IMR-90 (cell line): ENCODE measurements at regions of chrX and their contacts with region 1.

Region 1: GRCh38 chrX:118807151-118808017 is 16.2 kb upstream of the ZCCHC12 start:
- DNase-seq: peak; percentile 52
- ATAC-seq: peak; percentile 90
- H3K4me3 ChIP-seq: no peak overlapping the region
- H3K27ac ChIP-seq: no peak overlapping the region
- H3K4me1 ChIP-seq: no peaks in the 10 kb centered on the region
- H3K27me3 ChIP-seq: peaks cover 2% of the 10 kb centered on the region
- CTCF ChIP-seq: peak; percentile 73
- POLR2A ChIP-seq: no peak
- RAD21 ChIP-seq: peak; percentile 84

Region 2: GRCh38 chrX:118459494-118459893 is 347.9 kb before region 1 on chrX:
- CTCF ChIA-PET with region 1: no interaction called
- POLR2A ChIA-PET with region 1: no interaction called
- dilution Hi-C with region 1: no loop called
- in situ Hi-C with region 1: loop called (anchors 25 kb)
- intact Hi-C with region 1: loop called (anchors 10 kb)
- DNase-seq: peak; percentile 47
- ATAC-seq: peak; percentile 68; the same call in 1 of the 2 replicates
- H3K4me3 ChIP-seq: no peak overlapping the region
- H3K27ac ChIP-seq: no peak overlapping the region
- H3K4me1 ChIP-seq: no peaks in the 10 kb centered on the region
- H3K27me3 ChIP-seq: no peaks in the 10 kb centered on the region
- CTCF ChIP-seq: peak; percentile 67
- POLR2A ChIP-seq: no peak
- RAD21 ChIP-seq: peak; percentile 76

Region 3: DNA sequence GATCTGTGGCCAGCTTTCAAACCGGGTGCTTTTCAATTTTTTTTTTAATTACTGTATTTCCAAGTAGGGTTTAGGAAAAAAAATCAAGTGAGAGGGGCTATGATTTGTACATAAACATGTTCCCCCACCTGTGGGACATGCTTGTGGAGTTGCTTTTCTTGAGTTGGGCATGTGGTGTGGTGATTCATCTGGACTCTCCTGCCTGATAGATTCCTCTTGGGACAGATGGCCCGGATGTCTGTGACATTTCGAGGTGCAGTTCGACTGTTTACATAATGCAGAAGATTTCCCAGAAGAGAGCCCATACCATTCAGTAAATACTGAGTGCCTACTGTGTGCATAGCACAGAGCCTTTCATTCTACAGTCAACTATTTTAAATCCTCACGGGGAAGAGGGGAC is 261.9 kb before region 1 on chrX:
- CTCF ChIA-PET with region 1: no interaction called
- POLR2A ChIA-PET with region 1: no interaction called
- dilution Hi-C with region 1: no loop called
- in situ Hi-C with region 1: no loop called
- intact Hi-C with region 1: no loop called
- DNase-seq: peak; percentile 31
- ATAC-seq: no peak
- H3K4me3 ChIP-seq: no peak overlapping the region
- H3K27ac ChIP-seq: peak overlapping the region; percentile 40; the same call in 1 of the 2 replicates
- H3K4me1 ChIP-seq: peaks cover 6% of the 10 kb centered on the region
- H3K27me3 ChIP-seq: no peaks in the 10 kb centered on the region
- CTCF ChIP-seq: no peak
- POLR2A ChIP-seq: no peak
- RAD21 ChIP-seq: no peak

Region 4: GRCh38 chrX:118603981-118604380 is 203.4 kb before region 1 on chrX:
- CTCF ChIA-PET with region 1: no interaction called
- POLR2A ChIA-PET with region 1: no interaction called
- dilution Hi-C with region 1: no loop called
- in situ Hi-C with region 1: no loop called
- intact Hi-C with region 1: loop called (anchors 1 kb)
- DNase-seq: peak; percentile 61
- ATAC-seq: peak; percentile 89
- H3K4me3 ChIP-seq: no peak overlapping the region
- H3K27ac ChIP-seq: no peak overlapping the region
- H3K4me1 ChIP-seq: peaks cover 2% of the 10 kb centered on the region; the same call in 1 of the 2 replicates
- H3K27me3 ChIP-seq: no peaks in the 10 kb centered on the region
- CTCF ChIP-seq: peak; percentile 75
- POLR2A ChIP-seq: no peak
- RAD21 ChIP-seq: peak; percentile 72

Region 5: GRCh38 chrX:118644378-118644777 is 163.0 kb before region 1 on chrX:
- CTCF ChIA-PET with region 1: interaction called, 6 read pairs
- POLR2A ChIA-PET with region 1: no interaction called
- dilution Hi-C with region 1: no loop called
- in situ Hi-C with region 1: loop called (anchors 5 kb)
- intact Hi-C with region 1: loop called (anchors 1 kb)
- DNase-seq: peak; percentile 68
- ATAC-seq: peak; percentile 81
- H3K4me3 ChIP-seq: no peak overlapping the region
- H3K27ac ChIP-seq: no peak overlapping the region
- H3K4me1 ChIP-seq: no peaks in the 10 kb centered on the region
- H3K27me3 ChIP-seq: no peaks in the 10 kb centered on the region
- CTCF ChIP-seq: peak; percentile 63
- POLR2A ChIP-seq: no peak
- RAD21 ChIP-seq: peak; percentile 66

Region 6: DNA sequence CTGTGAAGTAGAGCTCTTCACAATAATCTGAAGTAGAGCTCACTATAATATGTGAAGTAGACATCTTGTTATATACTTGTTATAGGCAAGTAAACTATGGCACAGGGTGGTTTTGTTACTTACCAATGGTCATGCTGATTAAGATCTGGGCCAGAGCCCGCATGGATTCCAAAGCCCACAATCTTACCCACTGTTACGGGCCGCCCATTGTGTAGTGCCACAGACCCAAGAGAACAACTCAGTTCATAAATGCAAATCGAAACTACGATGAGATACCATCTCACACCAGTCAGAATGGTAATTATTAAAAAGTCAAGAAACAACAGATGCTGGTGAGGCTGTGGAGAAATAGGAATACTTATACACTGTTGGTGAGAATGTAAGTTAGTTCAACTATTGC is 218.5 kb after region 1 on chrX:
- CTCF ChIA-PET with region 1: no interaction called
- POLR2A ChIA-PET with region 1: no interaction called
- dilution Hi-C with region 1: no loop called
- in situ Hi-C with region 1: no loop called
- intact Hi-C with region 1: no loop called
- DNase-seq: no peak
- ATAC-seq: no peak
- H3K4me3 ChIP-seq: no peak overlapping the region
- H3K27ac ChIP-seq: no peak overlapping the region
- H3K4me1 ChIP-seq: no peaks in the 10 kb centered on the region
- H3K27me3 ChIP-seq: no peaks in the 10 kb centered on the region; the same call in 1 of the 2 replicates
- CTCF ChIP-seq: no peak
- POLR2A ChIP-seq: no peak
- RAD21 ChIP-seq: no peak

Region 7: GRCh38 chrX:119685225-119686066 is 878.1 kb after region 1 on chrX:
- CTCF ChIA-PET with region 1: no interaction called
- POLR2A ChIA-PET with region 1: no interaction called
- dilution Hi-C with region 1: no loop called
- in situ Hi-C with region 1: no loop called
- intact Hi-C with region 1: no loop called
- DNase-seq: no peak
- ATAC-seq: no peak; the same call in 1 of the 2 replicates
- H3K4me3 ChIP-seq: no peak overlapping the region
- H3K27ac ChIP-seq: no peak overlapping the region
- H3K4me1 ChIP-seq: peaks cover 5% of the 10 kb centered on the region; the same call in 1 of the 2 replicates
- H3K27me3 ChIP-seq: no peaks in the 10 kb centered on the region
- CTCF ChIP-seq: no peak
- POLR2A ChIP-seq: no peak
- RAD21 ChIP-seq: no peak